H1 (cell line): ENCODE measurements at regions of chr3 and their contacts with region 1.

Region 1: DNA sequence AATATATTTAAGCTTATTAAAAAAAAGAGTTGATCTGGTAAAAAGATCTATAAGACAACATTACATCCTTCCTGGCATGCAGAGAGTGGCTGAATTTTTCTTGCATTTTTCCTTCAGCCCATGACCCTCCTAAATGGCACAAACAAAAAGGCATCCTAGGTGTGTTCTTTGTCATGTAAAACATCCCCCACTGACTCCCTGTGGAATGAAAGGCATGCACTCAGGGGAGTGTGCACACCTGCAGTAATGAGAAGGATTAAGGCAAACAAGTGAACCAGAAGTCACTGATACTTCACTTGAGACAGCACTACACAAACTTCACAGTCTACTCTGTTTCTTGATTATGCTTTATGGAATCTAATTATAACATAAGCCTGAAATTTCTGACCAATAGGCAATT is 195.0 kb downstream of the RBMS3 start:
- DNase-seq: peak in 1 of 2 experiments; percentile 57
- H3K4me3 ChIP-seq: peak overlapping the region in 1 of 4 experiments; percentile 38; a peak in 1 of 8 replicates
- H3K27ac ChIP-seq: no peak overlapping the region
- H3K4me1 ChIP-seq: peaks cover 0 to 21% (median 4%) of the 10 kb centered on the region in 4 experiments; a peak in 4 of 7 replicates
- H3K27me3 ChIP-seq: no peaks in the 10 kb centered on the region
- CTCF ChIP-seq: no peak
- EP300 ChIP-seq: peak in 1 of 2 experiments; percentile 97; a peak in 2 of 3 replicates
- POLR2A ChIP-seq: no peak
- RAD21 ChIP-seq: peak in 1 of 2 experiments; percentile 15; a peak in 1 of 4 replicates

Region 2: DNA sequence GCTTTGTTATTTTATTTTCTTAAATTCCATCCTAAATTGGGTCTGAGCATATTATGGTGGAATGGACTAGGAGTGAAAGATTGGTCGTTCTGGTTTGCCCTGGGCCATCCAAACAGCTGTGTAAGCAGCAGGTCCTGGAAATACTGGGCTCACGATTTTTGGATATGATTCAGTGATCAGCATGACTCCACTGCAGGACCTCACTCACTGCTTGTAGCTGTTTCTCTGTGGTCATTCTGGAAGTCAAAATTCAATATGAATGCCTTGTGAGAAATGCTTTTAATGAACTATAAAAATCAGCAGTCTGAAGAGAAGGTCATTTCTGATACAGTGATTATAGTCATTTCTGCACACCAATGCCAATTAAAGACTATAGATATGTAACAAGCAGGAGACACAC is 10.0 kb before region 1 on chr3:
- CTCF ChIA-PET with region 1: interaction called, 7 read pairs
- POLR2A ChIA-PET with region 1: interaction called, 12 read pairs
- DNase-seq: no peak
- H3K4me3 ChIP-seq: no peak overlapping the region
- H3K27ac ChIP-seq: no peak overlapping the region
- H3K4me1 ChIP-seq: peaks cover 0 to 9% (median 5%) of the 10 kb centered on the region in 4 experiments; a peak in 4 of 7 replicates
- H3K27me3 ChIP-seq: no peaks in the 10 kb centered on the region
- CTCF ChIP-seq: no peak
- EP300 ChIP-seq: no peak
- POLR2A ChIP-seq: no peak
- RAD21 ChIP-seq: no peak

Region 3: GRCh38 chr3:29497282-29497681 is 21.4 kb after region 1 on chr3:
- CTCF ChIA-PET with region 1: no interaction called
- POLR2A ChIA-PET with region 1: no interaction called
- DNase-seq: no peak
- H3K4me3 ChIP-seq: no peak overlapping the region
- H3K27ac ChIP-seq: no peak overlapping the region
- H3K4me1 ChIP-seq: no peaks in the 10 kb centered on the region
- H3K27me3 ChIP-seq: no peaks in the 10 kb centered on the region
- CTCF ChIP-seq: no peak
- EP300 ChIP-seq: no peak
- POLR2A ChIP-seq: no peak
- RAD21 ChIP-seq: no peak